Heart right ventricle (tissue), 16 donors: ENCODE measurements at regions of chr9 and their contacts with region 1.

Region 1: DNA sequence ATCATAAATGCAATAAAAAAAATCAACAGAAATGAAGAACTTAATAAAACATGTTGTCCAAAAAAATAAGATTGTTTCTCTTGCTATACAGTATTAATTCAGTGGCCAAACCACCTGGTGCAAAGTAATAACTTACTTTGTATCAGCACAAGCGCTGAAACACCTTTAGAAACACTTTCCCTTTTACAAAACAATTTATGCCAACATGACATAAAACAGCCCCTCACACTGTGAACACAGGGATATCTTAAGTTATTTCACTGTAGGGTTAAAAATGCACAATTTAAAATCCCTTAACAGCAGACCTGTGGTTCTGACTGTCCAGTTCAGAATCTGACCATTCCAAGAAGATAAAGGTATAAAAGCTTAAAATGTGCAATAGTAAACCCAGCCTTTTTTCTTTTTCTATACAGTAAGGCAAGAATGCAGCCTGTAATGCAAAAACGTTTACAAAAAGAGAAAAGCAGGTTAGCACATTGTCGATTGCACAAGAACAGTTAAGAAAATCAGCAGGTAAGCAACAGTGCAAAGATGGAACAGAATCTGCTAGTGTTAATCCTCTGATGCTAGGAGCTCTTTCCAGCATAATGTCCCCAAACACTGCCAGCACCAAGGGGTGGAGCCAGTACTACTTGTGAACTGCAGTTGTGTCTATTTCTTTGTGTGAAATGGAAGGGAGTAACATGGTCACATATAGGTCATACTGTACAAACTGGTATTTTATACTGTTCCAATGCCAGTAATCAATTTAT is 21.6 kb downstream of the RAB14 start:
- DNase-seq: no peak
- ATAC-seq: no peak
- H3K4me3 ChIP-seq: no peak overlapping the region
- H3K27ac ChIP-seq: no peak overlapping the region
- H3K4me1 ChIP-seq: peaks cover 0 to 50% (median 32%) of the 10 kb centered on the region in 9 donors
- H3K27me3 ChIP-seq: no peaks in the 10 kb centered on the region
- CTCF ChIP-seq: no peak

Region 2: DNA sequence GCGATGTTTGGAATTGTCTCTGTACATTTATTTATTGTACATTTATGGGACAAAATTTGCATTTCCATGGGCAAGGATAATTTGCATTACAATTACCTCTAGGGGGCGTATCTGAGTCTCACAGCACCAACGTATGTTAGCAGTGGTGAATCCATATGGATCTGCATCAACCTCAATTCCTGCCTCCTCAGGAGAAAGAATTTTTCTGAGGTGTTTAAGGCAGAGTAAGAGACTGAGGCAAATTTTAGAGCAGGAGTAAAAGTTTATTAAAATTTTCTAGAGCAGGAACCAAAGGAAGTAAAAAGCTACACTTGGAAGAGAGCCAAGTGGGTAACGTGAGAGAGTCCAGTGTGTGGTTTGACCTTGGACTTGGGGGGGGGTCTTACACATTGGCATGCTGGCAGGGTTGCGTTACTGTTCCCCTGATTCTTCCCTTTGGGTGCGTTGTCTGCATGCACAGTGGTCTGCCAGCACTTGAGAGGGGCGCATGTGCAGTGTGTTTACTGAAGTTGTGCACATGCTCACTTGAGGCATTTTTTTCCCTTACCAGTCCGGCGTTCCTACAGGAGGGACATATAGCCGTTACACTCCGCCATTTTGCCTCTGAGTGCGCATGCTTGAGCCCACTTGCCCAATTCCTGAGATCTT is 42.5 kb after region 1 on chr9:
- intact Hi-C with region 1: no loop called
- DNase-seq: no peak
- ATAC-seq: peak in 5 of 8 donors; percentile 37 to 69 (median 44)
- H3K4me3 ChIP-seq: no peak overlapping the region
- H3K27ac ChIP-seq: no peak overlapping the region
- H3K4me1 ChIP-seq: peaks cover 0 to 23% (median 0%) of the 10 kb centered on the region in 9 donors
- H3K27me3 ChIP-seq: no peaks in the 10 kb centered on the region
- CTCF ChIP-seq: peak; percentile 54 to 84 (median 74)

Region 3: DNA sequence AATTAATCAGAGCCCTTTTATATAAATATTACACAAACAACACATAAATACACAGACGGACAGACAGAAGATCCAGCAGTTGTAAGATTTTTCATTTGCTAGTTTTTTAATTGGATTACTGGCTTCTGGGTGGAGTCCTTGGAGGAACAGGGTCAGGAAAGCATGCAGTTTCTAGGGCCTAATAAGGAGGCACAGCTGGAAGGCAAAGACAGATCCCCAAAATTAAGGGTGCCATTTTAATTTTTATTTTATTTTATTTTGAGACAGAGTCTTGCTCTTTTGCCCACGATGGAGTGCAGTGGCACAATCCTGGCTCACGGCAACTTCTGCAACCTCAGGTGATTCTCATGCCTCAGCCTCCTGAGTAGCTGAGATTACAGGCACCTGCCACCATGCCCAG is 1240.2 kb after region 1 on chr9:
- intact Hi-C with region 1: loop called in 1 of 10 experiments (anchors 5 kb)
- DNase-seq: no peak
- ATAC-seq: no peak
- H3K4me3 ChIP-seq: no peak overlapping the region
- H3K27ac ChIP-seq: no peak overlapping the region
- H3K4me1 ChIP-seq: no peaks in the 10 kb centered on the region
- H3K27me3 ChIP-seq: peaks cover 0 to 16% (median 0%) of the 10 kb centered on the region in 7 donors
- CTCF ChIP-seq: no peak